ENCODE measurements at regions of chr14 and their contacts with region 1.

Region 1: DNA sequence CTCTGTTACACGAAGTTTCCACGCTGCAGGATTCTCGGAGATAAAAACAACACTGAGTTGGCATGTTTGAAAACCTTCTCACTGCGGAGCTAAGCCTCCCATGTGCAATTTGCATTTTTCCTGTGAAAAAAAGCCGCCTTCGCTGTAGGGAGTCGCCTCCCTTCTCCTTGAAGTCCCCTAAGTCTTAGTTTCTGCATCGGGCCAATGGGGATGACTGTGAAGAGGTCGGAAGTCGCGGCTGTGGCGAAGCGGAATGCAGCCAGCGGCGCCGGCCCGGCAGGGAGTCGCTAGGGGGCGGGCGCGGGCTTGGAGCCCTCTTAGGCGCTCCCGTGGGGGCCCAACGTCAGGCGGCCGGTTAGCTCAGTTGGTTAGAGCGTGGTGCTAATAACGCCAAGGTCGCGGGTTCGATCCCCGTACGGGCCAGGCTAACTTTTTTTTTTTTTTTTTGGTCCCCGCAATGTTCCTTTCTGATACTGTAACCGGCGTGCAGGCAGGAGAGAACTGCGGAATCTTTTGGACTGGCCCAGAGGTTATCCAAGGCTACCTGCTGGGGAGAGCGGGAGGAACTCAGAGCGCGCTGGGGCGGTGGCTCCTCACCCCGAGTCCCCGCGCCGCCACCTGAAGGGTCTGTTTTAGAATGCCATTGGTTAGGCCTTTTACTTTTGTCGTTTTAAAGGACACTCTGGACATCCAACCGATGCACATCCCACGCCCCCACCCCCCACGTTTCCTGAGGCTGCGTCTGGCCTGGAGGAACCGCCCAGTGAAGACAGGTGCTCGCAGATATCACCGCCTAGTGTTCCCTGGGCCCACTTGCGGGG is 2.6 kb upstream of the ZNF839 start:
- DNase-seq: peak; percentile 97
- ATAC-seq: peak; percentile 69
- H3K4me3 Mint-ChIP-seq: peak overlapping the region; percentile 92
- H3K27ac Mint-ChIP-seq: peak overlapping the region; percentile 98
- H3K4me1 Mint-ChIP-seq: peaks cover 61% of the 10 kb centered on the region
- H3K27me3 Mint-ChIP-seq: no peaks in the 10 kb centered on the region

Region 2: GRCh38 chr14:101761032-101761880 is 555.7 kb before region 1 on chr14 and contains the start of gene PPP2R5C:
- CTCF ChIA-PET with region 1: no interaction called
- POLR2A ChIA-PET with region 1: no interaction called
- intact Hi-C with region 1: loop called in 1 of 2 experiments (anchors 2 kb)
- DNase-seq: peak; percentile 94
- ATAC-seq: peak; percentile 65
- H3K4me3 Mint-ChIP-seq: peak within 1 kb of the TSS; percentile 85
- H3K27ac Mint-ChIP-seq: peak within 1 kb of the TSS; percentile 78
- H3K4me1 Mint-ChIP-seq: peaks cover 43% of the 10 kb centered on the region
- H3K27me3 Mint-ChIP-seq: no peaks in the 10 kb centered on the region
- total RNA-seq, gene PPP2R5C: 232 to 281 TPM

Region 3: DNA sequence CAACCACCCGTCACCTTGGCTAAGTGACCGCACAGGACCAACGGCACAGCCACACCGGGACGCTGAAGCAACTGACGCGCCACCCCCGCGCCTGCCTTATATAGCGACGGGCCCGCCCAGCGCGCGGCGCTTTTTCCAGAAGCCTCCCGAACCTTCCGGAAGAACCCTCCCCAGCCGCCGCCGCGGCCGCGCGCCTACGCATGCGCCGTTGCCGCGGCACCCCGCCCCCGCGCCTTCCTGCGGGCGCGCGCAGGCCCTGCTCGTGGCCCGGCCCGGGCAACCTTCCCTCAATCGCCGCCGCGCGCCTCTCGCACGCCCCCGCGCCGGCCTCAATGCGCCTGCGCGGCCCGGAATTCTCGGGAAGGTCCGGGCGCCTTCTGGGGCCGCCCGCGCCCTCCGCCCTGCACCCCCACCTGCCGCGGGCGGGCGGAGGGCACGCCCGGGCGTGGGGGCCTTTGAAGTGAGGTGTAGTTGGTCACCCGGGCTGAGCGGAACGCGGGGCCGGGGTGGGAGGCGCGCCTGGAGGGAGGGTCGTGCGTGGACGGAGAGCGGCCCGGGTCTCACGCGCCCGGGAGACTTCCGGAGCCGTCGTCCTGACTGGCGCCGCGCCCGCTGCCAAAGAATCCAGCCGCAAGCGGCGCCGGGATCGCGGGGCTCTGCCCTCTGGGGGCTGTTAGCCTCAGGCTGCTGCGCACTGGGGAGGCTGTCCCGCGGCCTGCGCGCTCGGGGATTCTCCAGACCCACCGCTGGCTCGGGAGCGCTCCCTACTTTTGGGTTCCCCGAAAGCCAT is 229.8 kb before region 1 on chr14 and contains the start of gene HSP90AA1:
- CTCF ChIA-PET with region 1: interaction called, 3 read pairs
- POLR2A ChIA-PET with region 1: interaction called, 3 read pairs
- intact Hi-C with region 1: loop called (anchors 1 to 5 kb)
- DNase-seq: peak; percentile 97
- ATAC-seq: peak; percentile 68
- H3K4me3 Mint-ChIP-seq: peak within 1 kb of the TSS; percentile 77
- H3K27ac Mint-ChIP-seq: peak within 1 kb of the TSS; percentile 92
- H3K4me1 Mint-ChIP-seq: peaks cover 46% of the 10 kb centered on the region
- H3K27me3 Mint-ChIP-seq: no peaks in the 10 kb centered on the region
- total RNA-seq, gene HSP90AA1: 1,344 to 1,372 TPM

Region 4: DNA sequence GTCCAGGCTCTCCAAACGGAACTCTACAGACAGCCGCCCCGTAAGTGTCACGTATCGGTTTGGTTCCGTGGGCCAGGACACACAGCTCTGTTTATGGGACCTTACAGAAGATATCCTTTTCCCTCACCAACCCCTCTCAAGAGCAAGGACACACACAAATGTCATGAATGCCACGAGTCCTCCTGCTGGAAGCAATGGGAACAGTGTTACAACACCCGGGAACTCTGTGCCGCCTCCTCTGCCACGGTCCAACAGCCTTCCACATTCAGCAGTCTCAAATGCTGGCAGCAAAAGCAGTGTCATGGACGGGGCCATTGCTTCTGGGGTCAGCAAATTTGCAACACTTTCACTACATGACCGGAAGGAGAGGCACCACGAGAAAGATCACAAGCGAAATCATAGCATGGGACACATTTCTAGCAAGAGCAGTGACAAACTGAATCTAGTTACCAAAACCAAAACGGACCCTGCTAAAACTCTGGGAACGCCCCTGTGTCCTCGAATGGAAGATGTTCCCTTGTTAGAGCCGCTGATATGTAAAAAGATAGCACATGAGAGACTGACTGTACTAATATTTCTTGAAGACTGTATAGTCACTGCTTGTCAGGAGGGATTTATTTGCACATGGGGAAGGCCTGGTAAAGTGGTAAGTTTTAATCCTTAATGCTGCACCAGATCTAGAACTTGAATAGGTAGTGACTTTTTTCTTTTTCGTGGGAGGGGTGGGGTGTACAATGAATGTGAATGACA is 107.6 kb before region 1 on chr14:
- CTCF ChIA-PET with region 1: no interaction called
- POLR2A ChIA-PET with region 1: no interaction called
- intact Hi-C with region 1: no loop called
- DNase-seq: no peak
- ATAC-seq: no peak
- H3K4me3 Mint-ChIP-seq: no peak overlapping the region
- H3K27ac Mint-ChIP-seq: peak overlapping the region; percentile 14
- H3K4me1 Mint-ChIP-seq: peaks cover 2% of the 10 kb centered on the region
- H3K27me3 Mint-ChIP-seq: no peaks in the 10 kb centered on the region

Region 5: GRCh38 chr14:102235275-102235897 is 81.6 kb before region 1 on chr14:
- CTCF ChIA-PET with region 1: interaction called, 7 read pairs
- POLR2A ChIA-PET with region 1: no interaction called
- intact Hi-C with region 1: loop called (anchors 1 kb)
- DNase-seq: peak; percentile 91
- ATAC-seq: peak; percentile 100
- H3K4me3 Mint-ChIP-seq: no peak overlapping the region
- H3K27ac Mint-ChIP-seq: no peak overlapping the region
- H3K4me1 Mint-ChIP-seq: no peaks in the 10 kb centered on the region
- H3K27me3 Mint-ChIP-seq: no peaks in the 10 kb centered on the region

Region 6: GRCh38 chr14:102509744-102510615 is 193.0 kb after region 1 on chr14 and contains the start of gene ANKRD9:
- CTCF ChIA-PET with region 1: interaction called, 6 read pairs
- POLR2A ChIA-PET with region 1: no interaction called
- intact Hi-C with region 1: loop called in 1 of 2 experiments (anchors 1 kb)
- DNase-seq: peak; percentile 95
- ATAC-seq: peak; percentile 89
- H3K4me3 Mint-ChIP-seq: peak within 1 kb of the TSS; percentile 75
- H3K27ac Mint-ChIP-seq: peak within 1 kb of the TSS; percentile 51
- H3K4me1 Mint-ChIP-seq: peaks cover 16% of the 10 kb centered on the region
- H3K27me3 Mint-ChIP-seq: peaks cover 2% of the 10 kb centered on the region
- total RNA-seq, gene ANKRD9: 4.8 to 9.3 TPM

Region 7: GRCh38 chr14:102774391-102775153 is 457.6 kb after region 1 on chr14:
- CTCF ChIA-PET with region 1: no interaction called
- POLR2A ChIA-PET with region 1: interaction called, 3 read pairs
- intact Hi-C with region 1: loop called in 1 of 2 experiments (anchors 5 kb)
- DNase-seq: peak; percentile 73
- ATAC-seq: peak; percentile 58
- H3K4me3 Mint-ChIP-seq: peak overlapping the region; percentile 7
- H3K27ac Mint-ChIP-seq: peak overlapping the region; percentile 78
- H3K4me1 Mint-ChIP-seq: peaks cover 32% of the 10 kb centered on the region
- H3K27me3 Mint-ChIP-seq: no peaks in the 10 kb centered on the region